Caco-2 (cell line): ENCODE measurements at regions of chr3 and their contacts with region 1.

Region 1: GRCh38 chr3:29144807-29145206 is 136.1 kb upstream of the RBMS3 start:
- DNase-seq: no peak
- H3K4me3 ChIP-seq: no peak overlapping the region
- H3K4me3 Mint-ChIP-seq: no peak overlapping the region
- H3K27ac Mint-ChIP-seq: no peak overlapping the region
- H3K4me1 ChIP-seq: peaks cover 16% of the 10 kb centered on the region
- H3K4me1 Mint-ChIP-seq: no peaks in the 10 kb centered on the region
- H3K27me3 ChIP-seq: no peaks in the 10 kb centered on the region
- H3K27me3 Mint-ChIP-seq: no peaks in the 10 kb centered on the region
- CTCF ChIP-seq: no peak

Region 2: DNA sequence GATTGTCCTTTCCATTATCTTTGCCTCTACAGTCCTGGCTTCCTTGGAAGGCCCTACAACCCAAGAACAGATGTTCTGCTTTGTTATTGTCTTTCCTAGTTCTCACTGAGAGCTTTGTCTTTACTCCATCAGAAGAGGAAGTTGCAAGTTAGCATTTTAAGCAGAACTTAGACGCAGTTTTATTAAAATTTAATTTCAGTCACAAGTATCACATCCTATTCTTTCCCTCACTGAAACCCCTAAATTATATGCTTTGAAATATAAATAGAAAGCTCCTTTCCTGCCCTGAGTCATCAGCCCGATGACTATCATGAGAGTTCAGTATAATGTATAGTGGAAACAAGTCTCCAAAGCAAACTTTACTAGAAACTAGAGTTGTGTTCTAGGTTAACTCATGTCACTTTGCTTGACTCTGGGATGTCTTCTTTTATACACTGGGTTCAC is 155.1 kb before region 1 on chr3:
- CTCF ChIA-PET with region 1: no interaction called
- POLR2A ChIA-PET with region 1: no interaction called
- intact Hi-C with region 1: no loop called
- DNase-seq: no peak
- H3K4me3 ChIP-seq: no peak overlapping the region
- H3K4me3 Mint-ChIP-seq: no peak overlapping the region
- H3K27ac Mint-ChIP-seq: no peak overlapping the region
- H3K4me1 ChIP-seq: no peaks in the 10 kb centered on the region
- H3K4me1 Mint-ChIP-seq: no peaks in the 10 kb centered on the region
- H3K27me3 ChIP-seq: no peaks in the 10 kb centered on the region
- H3K27me3 Mint-ChIP-seq: no peaks in the 10 kb centered on the region
- CTCF ChIP-seq: no peak

Region 3: GRCh38 chr3:29011441-29011840 is 133.4 kb before region 1 on chr3:
- CTCF ChIA-PET with region 1: no interaction called
- POLR2A ChIA-PET with region 1: no interaction called
- intact Hi-C with region 1: no loop called
- DNase-seq: no peak
- H3K4me3 ChIP-seq: no peak overlapping the region
- H3K4me3 Mint-ChIP-seq: no peak overlapping the region
- H3K27ac Mint-ChIP-seq: no peak overlapping the region
- H3K4me1 ChIP-seq: no peaks in the 10 kb centered on the region
- H3K4me1 Mint-ChIP-seq: no peaks in the 10 kb centered on the region
- H3K27me3 ChIP-seq: no peaks in the 10 kb centered on the region
- H3K27me3 Mint-ChIP-seq: peaks cover 2% of the 10 kb centered on the region
- CTCF ChIP-seq: no peak

Region 4: GRCh38 chr3:29212789-29213433 is 68.1 kb after region 1 on chr3:
- CTCF ChIA-PET with region 1: no interaction called
- POLR2A ChIA-PET with region 1: no interaction called
- intact Hi-C with region 1: loop called (anchors 2 kb)
- DNase-seq: no peak
- H3K4me3 ChIP-seq: no peak overlapping the region
- H3K4me3 Mint-ChIP-seq: no peak overlapping the region
- H3K27ac Mint-ChIP-seq: peak overlapping the region; percentile 48
- H3K4me1 ChIP-seq: peaks cover 12% of the 10 kb centered on the region; the same call in 1 of the 2 replicates
- H3K4me1 Mint-ChIP-seq: no peaks in the 10 kb centered on the region
- H3K27me3 ChIP-seq: no peaks in the 10 kb centered on the region
- H3K27me3 Mint-ChIP-seq: no peaks in the 10 kb centered on the region
- CTCF ChIP-seq: no peak

Region 5: DNA sequence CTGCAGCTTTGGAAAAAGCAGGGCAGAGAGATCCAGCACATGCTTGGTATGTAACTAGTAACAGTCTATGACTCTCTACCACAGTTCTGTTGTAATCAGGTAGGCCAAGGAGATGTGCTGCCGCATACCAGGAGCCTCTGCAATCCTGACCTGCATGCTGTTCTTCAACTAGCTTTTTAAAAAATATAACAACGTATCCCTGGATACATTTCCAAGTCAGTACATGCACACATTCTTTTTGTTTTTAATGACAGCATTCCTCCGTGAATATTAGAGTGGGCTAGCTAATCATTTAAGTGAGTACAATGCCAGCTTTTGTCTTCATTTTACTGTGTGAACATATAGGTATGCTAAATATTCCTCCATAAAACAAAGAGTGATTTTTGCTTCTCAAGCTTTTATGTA is 573.9 kb after region 1 on chr3:
- CTCF ChIA-PET with region 1: no interaction called
- POLR2A ChIA-PET with region 1: no interaction called
- intact Hi-C with region 1: loop called (anchors 5 kb)
- DNase-seq: peak; percentile 22 to 41
- H3K4me3 ChIP-seq: no peak overlapping the region
- H3K4me3 Mint-ChIP-seq: no peak overlapping the region
- H3K27ac Mint-ChIP-seq: no peak overlapping the region
- H3K4me1 ChIP-seq: peaks cover 10% of the 10 kb centered on the region; the same call in 1 of the 2 replicates
- H3K4me1 Mint-ChIP-seq: peaks cover 12% of the 10 kb centered on the region
- H3K27me3 ChIP-seq: no peaks in the 10 kb centered on the region
- H3K27me3 Mint-ChIP-seq: no peaks in the 10 kb centered on the region
- CTCF ChIP-seq: no peak